Esophagus muscularis mucosa (tissue), 4 donors: ENCODE measurements at regions of chr12 and their contacts with region 1.

Region 1: DNA sequence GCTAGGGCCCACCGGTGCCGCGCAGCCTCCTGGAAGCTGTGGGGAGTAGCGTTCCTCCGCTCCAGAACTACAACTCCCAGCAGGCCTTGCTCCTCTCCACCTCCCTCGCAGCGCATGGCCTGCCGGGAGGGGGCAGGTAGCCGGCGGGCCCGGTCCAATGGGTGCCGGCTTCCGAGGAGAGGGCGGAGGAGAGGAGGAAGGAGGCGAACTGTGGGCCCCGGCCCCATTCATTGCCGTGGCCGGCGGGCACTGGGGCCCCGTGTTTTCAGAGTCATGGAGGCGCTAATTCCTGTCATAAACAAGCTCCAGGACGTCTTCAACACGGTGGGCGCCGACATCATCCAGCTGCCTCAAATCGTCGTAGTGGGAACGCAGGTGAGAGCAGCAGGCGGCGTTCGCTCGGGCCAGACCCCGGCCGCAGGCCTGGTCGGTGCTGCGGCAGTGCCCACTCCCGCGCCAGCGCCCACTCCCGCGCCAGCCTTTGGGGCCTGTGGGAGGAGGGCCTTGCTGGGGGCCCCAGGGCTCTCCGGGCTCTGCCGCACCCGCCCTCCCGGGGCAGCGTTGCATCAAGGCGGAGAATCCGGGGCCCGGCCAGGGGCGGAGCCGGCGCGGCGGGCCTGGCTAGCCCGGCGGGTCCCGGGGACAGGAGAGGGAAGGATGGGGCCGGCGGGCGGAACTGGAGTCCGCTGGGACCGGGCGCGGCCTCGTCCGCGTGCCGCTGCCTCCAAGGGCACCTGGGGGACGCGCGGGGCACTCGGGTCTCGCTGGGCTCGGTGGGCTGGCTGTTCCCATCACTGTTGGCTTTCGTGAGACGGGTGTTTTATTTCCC is at the start of gene DNM1L:
- DNase-seq: peak; percentile 93
- H3K4me3 ChIP-seq: peak within 1 kb of the TSS; percentile 78 to 99 (median 92)
- H3K27ac ChIP-seq: peak within 1 kb of the TSS; percentile 87 to 99 (median 96)
- H3K4me1 ChIP-seq: peaks cover 12 to 32% (median 26%) of the 10 kb centered on the region in 4 donors
- H3K27me3 ChIP-seq: no peaks in the 10 kb centered on the region
- CTCF ChIP-seq: peak in 1 of 3 experiments; percentile 14
- EP300 ChIP-seq: no peak
- POLR2A ChIP-seq: peak; percentile 58
- total RNA-seq, gene DNM1L: 66.4 to 81.4 (median 71.8) TPM

Region 2: DNA sequence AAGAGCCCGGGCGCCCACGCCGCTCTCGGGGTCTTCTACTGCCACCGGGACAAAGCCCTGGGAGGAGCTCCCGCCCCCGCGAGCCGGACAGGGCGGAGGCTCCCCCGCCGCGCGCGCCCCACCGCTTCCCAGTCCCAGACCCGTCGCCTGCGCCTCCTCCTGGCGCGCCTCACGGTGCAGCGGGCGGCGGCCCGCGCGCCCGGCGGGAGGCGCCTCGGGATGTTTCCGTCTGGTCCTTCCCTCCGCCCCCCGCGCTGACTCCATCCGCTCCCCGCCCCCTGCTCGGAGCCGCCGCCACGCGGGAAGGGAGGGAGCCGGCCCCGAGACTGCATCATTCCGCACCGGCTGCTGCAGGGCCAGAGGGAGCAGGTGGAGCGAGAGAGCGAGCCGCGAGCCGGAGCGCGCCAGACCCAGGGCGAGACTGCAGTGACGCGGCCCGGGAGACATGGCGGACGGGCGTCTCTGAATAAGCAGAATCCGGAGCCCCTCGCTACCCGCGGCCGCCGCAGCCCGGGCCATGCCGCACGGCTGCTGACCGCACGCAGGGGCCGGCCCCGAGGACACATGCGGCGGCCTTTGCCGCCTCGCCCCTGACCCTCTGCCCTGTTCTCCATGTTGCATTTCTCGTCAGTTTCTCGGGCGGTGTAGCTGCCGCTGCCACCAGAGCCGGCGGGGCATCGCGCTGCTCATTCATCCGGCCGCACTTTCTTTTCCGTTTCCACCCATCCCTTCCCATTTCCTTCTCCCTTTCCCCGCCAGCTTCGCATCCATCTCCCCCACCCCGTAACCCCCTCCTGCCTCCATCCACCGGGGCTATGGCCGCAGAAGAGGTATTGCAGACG is 572.6 kb before region 1 on chr12 and contains the start of gene BICD1:
- intact Hi-C with region 1: loop called (anchors 10 kb)
- DNase-seq: peak; percentile 95
- H3K4me3 ChIP-seq: peak within 1 kb of the TSS; percentile 80 to 97 (median 96)
- H3K27ac ChIP-seq: peak within 1 kb of the TSS; percentile 92 to 98 (median 96)
- H3K4me1 ChIP-seq: peaks cover 26 to 40% (median 32%) of the 10 kb centered on the region in 4 donors
- H3K27me3 ChIP-seq: no peaks in the 10 kb centered on the region
- CTCF ChIP-seq: peak; percentile 38 to 49 (median 45)
- EP300 ChIP-seq: no peak
- POLR2A ChIP-seq: peak; percentile 65
- total RNA-seq, gene BICD1: 6.8 to 14.1 (median 10.2) TPM